Heart right ventricle (tissue), 16 donors: ENCODE measurements at regions of chr16 and their contacts with region 1.

Region 1: DNA sequence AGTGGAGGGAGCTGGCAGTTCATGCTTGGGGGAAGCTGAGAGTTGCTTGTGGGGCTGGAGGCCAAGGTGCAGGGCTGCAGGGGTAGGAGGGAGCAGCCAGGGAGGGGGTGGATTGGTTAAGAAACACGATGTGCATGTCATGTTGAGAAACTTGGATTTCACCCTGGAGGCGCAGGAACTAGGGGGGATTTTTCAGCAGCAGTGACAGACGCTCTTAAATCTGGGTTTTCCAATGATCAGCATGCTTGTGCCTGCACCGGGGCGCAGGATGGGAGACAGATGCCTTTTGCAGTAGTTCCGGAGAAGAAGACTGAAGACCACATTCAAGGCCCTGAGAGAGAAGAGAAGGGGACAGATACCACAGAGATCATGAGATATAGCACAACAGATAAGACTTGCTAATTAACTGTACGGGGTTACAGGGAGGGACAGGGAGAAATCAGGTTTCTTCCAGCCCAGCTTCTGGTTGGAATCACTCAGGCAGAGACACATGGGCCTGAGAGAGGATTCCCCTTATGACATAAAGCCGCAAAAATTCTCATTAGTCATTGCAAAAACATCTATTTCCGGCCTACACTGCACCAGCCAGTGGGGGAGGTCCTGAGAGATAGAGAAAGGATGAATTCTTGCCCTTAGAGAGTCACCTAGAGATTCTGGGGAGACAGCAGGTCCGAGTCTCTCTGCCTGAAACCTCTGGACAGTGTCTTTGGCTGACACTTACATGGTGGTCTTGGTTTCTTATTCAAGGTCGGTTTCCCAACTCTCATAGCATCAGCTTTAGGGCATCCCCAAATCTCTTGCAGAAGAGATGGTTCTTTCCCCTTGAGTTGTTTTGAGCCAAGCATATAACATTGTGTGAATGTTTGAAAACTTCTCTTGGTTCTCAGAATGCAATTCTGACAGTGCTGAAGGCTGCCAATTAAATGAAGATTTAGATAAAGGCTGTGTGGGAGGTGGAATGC is 27.1 kb downstream of the CDH13 start:
- DNase-seq: no peak
- ATAC-seq: peak; percentile 63 to 86 (median 74)
- H3K4me3 ChIP-seq: no peak overlapping the region
- H3K27ac ChIP-seq: peak overlapping the region in 8 of 10 donors; percentile 21 to 79 (median 46)
- H3K4me1 ChIP-seq: peaks cover 11 to 62% (median 42%) of the 10 kb centered on the region in 9 donors
- H3K27me3 ChIP-seq: no peaks in the 10 kb centered on the region
- CTCF ChIP-seq: no peak

Region 2: GRCh38 chr16:82699711-82700495 is 46.1 kb after region 1 on chr16:
- intact Hi-C with region 1: loop called in 1 of 10 experiments (anchors 5 kb)
- DNase-seq: peak in 1 of 2 donors; percentile 53
- ATAC-seq: peak; percentile 59 to 82 (median 76)
- H3K4me3 ChIP-seq: no peak overlapping the region
- H3K27ac ChIP-seq: peak overlapping the region; percentile 54 to 93 (median 84)
- H3K4me1 ChIP-seq: peaks cover 9 to 67% (median 50%) of the 10 kb centered on the region in 9 donors
- H3K27me3 ChIP-seq: no peaks in the 10 kb centered on the region
- CTCF ChIP-seq: no peak